ENCODE measurements at regions of chr16 and their contacts with region 1.

Region 1: GRCh38 chr16:60979119-60979518 is 1057.1 kb downstream of the CDH8 start:
- DNase-seq: no peak
- ATAC-seq: no peak
- H3K4me3 ChIP-seq: no peak overlapping the region
- H3K27ac ChIP-seq: no peak overlapping the region
- H3K4me1 ChIP-seq: no peaks in the 10 kb centered on the region
- H3K27me3 ChIP-seq: no peaks in the 10 kb centered on the region
- CTCF ChIP-seq: no peak
- POLR2A ChIP-seq: no peak

Region 2: DNA sequence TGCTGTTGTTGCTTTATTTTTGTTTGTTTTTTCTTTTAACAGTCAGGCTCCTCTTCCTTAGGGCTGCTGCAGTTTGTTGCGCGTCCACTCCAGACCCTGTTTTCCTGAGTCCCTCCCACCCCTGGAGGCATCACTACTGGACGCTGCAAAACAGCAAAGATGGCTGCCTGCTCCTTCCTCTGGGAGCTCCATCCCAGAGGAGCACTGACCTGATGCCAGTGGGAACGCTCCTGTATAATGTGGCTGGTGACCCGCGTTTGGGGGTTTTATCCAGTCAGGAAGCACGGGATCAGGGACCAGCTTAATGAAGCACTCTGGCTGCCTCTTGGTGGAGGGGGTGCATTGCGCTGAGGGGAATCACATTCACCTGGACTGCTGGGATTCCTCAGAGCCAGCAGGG is 51.5 kb after region 1 on chr16:
- intact Hi-C with region 1: loop called in 1 of 2 experiments (anchors 10 kb)
- DNase-seq: no peak
- ATAC-seq: no peak
- H3K4me3 ChIP-seq: no peak overlapping the region
- H3K27ac ChIP-seq: no peak overlapping the region
- H3K4me1 ChIP-seq: no peaks in the 10 kb centered on the region
- H3K27me3 ChIP-seq: no peaks in the 10 kb centered on the region
- CTCF ChIP-seq: no peak
- POLR2A ChIP-seq: no peak

Measured in right lobe of liver (tissue), 6 donors.